ENCODE measurements at regions of chr10 and their contacts with region 1.

Region 1: DNA sequence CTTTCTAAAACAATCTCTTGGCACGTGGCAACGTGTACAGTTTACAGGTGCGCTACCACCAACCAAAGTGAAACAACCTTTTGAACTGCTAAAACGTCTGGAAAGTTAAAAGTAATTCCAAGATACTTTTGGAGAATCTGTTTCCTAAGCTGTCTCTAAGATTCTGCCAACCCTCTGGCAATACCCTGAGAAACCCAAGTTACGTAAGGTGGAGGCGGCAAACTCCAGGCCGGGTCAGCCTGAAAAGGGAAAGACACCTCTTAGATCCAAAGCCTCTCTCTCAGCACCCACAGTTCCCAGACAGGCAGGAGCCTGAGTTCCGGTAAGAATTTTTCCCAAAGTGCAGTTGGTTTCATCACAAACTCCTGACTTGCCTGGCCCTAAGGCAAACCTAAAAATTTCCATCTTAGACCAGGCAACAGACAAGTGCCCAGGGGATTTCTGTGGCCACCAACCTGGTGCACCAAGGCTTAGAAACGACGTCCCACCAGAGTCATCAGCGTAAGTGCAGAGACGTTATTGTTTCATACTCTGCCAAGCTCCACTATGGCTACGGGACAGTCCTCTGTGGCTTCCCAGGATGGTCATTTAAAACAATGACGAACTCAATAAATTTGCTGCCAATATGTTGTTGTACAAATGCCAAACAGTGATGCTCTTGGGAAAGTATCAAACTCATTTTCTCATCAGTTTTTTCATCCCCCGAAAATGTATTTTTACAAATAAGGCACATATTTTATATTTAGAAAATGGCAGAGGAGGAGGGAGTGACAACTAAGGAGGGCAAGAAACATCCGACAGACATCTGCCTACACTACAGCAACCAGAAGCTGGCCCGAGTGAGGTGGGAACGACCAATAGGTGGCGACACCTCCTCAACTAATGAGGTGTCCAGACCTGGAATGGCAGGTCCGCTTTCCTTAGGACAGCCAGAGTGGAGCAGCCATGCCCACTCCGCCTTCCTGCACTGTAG is 205.8 kb upstream of the FRMD4A start:
- DNase-seq: peak in 1 of 5 donors; percentile 41
- H3K4me3 ChIP-seq: no peak overlapping the region
- H3K27ac ChIP-seq: no peak overlapping the region
- H3K4me1 ChIP-seq: peaks cover 16% of the 10 kb centered on the region
- H3K27me3 ChIP-seq: no peaks in the 10 kb centered on the region
- CTCF ChIP-seq: no peak
- EP300 ChIP-seq: no peak
- POLR2A ChIP-seq: no peak

Region 2: GRCh38 chr10:14822879-14823755 is 286.6 kb after region 1 on chr10:
- intact Hi-C with region 1: loop called in 1 of 4 experiments (anchors 10 kb)
- DNase-seq: no peak
- H3K4me3 ChIP-seq: no peak overlapping the region
- H3K27ac ChIP-seq: no peak overlapping the region
- H3K4me1 ChIP-seq: no peaks in the 10 kb centered on the region
- H3K27me3 ChIP-seq: no peaks in the 10 kb centered on the region
- CTCF ChIP-seq: no peak
- EP300 ChIP-seq: no peak
- POLR2A ChIP-seq: no peak